KBM-7 (cell line): ENCODE measurements at regions of chr17 and their contacts with region 1.

Region 1: DNA sequence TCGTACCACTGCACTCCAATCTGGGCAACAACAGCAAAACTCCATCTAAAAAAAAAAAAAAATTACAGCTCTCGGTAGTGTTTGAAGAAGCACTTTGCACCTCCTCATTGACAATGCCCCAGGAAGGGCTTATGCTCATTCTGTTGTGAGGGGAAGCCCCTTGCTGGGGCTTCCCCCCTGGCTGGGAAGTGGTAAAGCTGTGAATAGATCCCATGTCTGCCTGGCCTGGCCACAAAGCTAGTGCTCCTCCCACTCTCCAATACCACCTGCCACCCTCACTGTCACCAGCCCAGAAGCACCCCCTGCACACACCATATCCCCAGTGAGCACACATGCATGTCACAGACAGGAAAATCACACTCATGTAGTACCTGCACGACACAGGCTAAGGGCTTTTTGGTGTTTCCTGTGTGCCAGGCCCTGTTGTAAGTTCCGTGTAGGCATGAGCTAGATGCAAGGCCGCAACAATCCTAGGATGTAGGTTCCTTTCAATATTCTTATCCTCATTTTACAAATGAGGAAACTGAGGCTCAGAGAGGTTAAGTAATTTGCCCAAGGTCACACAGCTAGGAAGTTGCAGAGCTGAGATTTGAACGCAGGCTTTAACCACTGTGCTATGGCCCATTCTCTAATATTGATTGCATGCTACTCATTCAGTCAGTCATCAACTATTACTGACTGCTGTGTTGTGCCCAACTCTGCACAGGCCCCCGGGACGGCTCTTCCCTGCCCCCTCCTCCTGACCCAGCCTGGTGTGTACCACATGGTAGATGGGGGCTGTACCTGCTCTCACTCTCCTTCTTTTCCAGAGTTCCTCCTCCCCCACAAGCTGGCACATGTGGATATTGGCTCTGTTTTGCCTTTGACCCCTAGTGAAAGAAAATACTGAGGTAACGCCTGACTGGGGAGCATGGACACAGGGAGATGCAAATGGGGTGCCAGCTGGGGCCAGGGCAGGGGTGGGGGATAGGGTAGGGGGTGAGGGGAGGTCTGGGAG is 11.9 kb upstream of the COL1A1 start:
- DNase-seq: peak; percentile 55

Region 2: DNA sequence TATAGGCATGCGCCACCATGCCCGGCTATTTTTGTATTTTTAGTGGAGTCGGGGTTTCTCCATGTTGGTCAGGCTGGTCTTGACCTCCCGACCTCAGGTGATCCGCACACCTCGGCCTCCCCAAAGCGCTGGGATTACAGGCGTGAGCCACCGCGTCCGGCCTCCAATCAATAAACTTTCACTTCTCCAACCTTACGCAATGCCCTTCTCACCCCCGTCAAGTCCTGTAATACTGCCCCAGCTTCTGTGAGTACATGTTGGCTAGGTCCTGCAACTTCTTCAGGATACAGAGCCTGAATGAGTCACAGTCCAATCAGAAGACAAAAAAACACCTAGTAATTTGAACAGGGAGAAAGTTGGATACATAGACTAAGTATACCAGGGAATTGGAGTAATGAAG is 935.7 kb before region 1 on chr17:
- in situ Hi-C with region 1: no loop called
- DNase-seq: no peak

Region 3: DNA sequence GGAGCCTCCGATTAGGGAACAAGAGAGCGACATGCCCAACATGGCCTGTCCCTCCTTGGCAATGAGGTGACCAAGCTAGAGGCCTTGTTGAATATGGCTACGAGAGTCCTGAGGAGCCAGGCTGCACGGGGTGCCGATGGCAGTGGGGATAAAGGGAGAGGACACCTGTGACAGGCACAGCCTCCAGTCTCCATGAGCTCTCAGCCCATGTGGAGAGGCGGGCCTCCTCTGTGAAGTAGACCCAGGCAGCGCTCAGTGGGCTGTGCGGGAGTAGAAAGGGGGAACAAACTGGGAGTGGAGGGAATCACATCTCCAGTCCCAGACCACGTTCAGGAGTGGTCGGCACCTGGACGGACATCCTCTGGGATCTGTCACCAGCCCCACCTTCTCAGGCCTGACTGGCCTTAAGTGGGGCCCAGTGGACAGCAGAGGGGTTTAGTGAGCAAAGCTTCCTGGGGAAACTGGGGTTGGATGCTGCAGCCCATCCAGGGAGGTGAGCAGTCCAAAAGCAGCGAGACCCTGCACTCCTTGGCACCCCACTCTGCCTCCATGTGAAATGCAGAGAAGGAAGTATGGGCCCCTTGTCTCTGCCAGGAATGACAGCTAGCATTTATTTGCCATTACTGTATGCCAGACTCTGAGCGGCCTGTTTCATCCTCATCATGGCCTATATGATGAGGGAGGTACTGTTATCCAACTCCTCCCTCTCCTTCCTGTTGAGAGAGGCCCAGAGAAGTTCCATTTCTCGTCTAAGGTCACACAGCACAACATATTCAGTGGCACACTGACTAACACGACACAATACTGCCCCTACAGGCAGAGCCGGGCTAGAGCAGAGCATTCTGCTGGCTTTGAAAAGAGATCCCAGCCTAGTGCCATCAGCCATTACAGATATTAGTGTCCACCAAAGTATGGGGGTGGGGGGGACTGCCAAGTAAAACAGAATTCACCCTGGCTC is 56.4 kb after region 1 on chr17:
- in situ Hi-C with region 1: loop called (anchors 10 kb)
- DNase-seq: peak; percentile 56

Region 4: GRCh38 chr17:50797135-50797810 is 583.9 kb after region 1 on chr17:
- in situ Hi-C with region 1: no loop called
- DNase-seq: peak; percentile 41